Mammary epithelial cell (primary cell): ENCODE measurements at regions of chr11 and their contacts with region 1.

Region 1: DNA sequence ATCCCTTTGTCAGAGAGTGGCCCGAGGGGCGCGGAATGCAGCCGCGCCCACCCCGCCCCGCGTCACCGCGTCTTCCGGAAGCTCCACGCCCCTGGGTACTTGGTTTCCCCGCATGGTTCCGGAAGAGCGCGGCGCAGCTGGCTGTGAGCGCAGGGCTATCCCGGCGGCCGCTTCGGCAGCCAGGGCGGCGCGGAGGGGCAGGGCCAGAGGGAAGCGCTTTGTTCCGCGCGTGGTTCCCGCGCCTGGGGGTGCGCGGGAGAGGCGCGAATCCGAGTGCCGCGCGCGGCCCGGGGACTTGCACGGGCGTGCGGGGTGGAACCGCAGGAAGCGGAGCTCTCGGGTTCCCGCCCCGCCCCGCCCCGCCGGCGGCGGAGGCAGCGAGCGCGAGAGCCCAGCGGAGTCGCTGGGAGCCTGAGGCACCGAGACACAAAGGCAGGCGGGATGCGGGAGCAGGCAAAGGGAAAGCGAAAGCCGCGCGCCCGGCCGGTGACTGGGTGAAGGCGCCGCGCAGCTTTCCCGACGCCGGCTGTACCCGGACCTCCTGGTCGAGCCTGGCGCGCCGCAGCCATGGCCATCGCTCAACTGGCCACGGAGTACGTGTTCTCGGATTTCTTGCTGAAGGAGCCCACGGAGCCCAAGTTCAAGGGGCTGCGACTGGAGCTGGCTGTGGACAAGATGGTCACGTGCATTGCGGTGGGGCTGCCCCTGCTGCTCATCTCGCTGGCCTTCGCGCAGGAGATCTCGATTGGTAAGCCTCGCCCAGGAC is at the start of gene PANX1:
- DNase-seq: peak; percentile 91
- H3K4me3 ChIP-seq: peak within 1 kb of the TSS; percentile 56 to 97 (median 56)
- H3K27ac ChIP-seq: peak within 1 kb of the TSS; percentile 92
- H3K4me1 ChIP-seq: peaks cover 48% of the 10 kb centered on the region
- H3K27me3 ChIP-seq: no peaks in the 10 kb centered on the region
- CTCF ChIP-seq: no peak
- total RNA-seq, gene PANX1: 42.1 to 48.2 TPM

Region 2: GRCh38 chr11:94077552-94078293 is 51.2 kb before region 1 on chr11:
- CTCF ChIA-PET with region 1: no interaction called
- dilution Hi-C with region 1: loop called (anchors 5 kb)
- in situ Hi-C with region 1: no loop called
- intact Hi-C with region 1: no loop called
- DNase-seq: no peak
- H3K4me3 ChIP-seq: no peak overlapping the region
- H3K27ac ChIP-seq: no peak overlapping the region
- H3K4me1 ChIP-seq: peaks cover 4% of the 10 kb centered on the region
- H3K27me3 ChIP-seq: no peaks in the 10 kb centered on the region
- CTCF ChIP-seq: no peak

Region 3: GRCh38 chr11:94183886-94184264 is 54.9 kb after region 1 on chr11:
- CTCF ChIA-PET with region 1: no interaction called
- dilution Hi-C with region 1: no loop called
- in situ Hi-C with region 1: no loop called
- intact Hi-C with region 1: loop called (anchors 2 kb)
- DNase-seq: peak; percentile 48
- H3K4me3 ChIP-seq: no peak overlapping the region
- H3K27ac ChIP-seq: no peak overlapping the region
- H3K4me1 ChIP-seq: no peaks in the 10 kb centered on the region
- H3K27me3 ChIP-seq: no peaks in the 10 kb centered on the region
- CTCF ChIP-seq: peak; percentile 94 to 96